ENCODE measurements at regions of chr20 and their contacts with region 1.

Region 1: GRCh38 chr20:37384683-37385174 is 38.8 kb downstream of the SRC start:
- DNase-seq: peak in 1 of 2 donors; percentile 47
- ATAC-seq: peak; percentile 57 to 89
- H3K4me3 ChIP-seq: peak overlapping the region; percentile 54 to 59 (median 57)
- H3K27ac ChIP-seq: no peak overlapping the region
- H3K4me1 ChIP-seq: peaks cover 0 to 5% of the 10 kb centered on the region in 2 donors
- H3K27me3 ChIP-seq: no peaks in the 10 kb centered on the region
- CTCF ChIP-seq: peak; percentile 84 to 97 (median 93)
- POLR2A ChIP-seq: no peak

Region 2: GRCh38 chr20:37192137-37192854 is 192.4 kb before region 1 on chr20:
- in situ Hi-C with region 1: loop called in 3 of 4 experiments (anchors 5 to 10 kb)
- intact Hi-C with region 1: loop called (anchors 1 kb)
- DNase-seq: peak; percentile 74 to 87
- ATAC-seq: peak; percentile 72 to 87
- H3K4me3 ChIP-seq: no peak overlapping the region
- H3K27ac ChIP-seq: peak overlapping the region in 3 of 4 donors; percentile 40 to 72 (median 47)
- H3K4me1 ChIP-seq: peaks cover 47 to 50% of the 10 kb centered on the region in 2 donors
- H3K27me3 ChIP-seq: no peaks in the 10 kb centered on the region
- CTCF ChIP-seq: peak; percentile 73 to 95 (median 85)
- POLR2A ChIP-seq: no peak

Region 3: GRCh38 chr20:37270576-37271420 is 113.9 kb before region 1 on chr20:
- in situ Hi-C with region 1: loop called (anchors 5 to 10 kb)
- intact Hi-C with region 1: loop called (anchors 1 kb)
- DNase-seq: no peak
- ATAC-seq: no peak
- H3K4me3 ChIP-seq: no peak overlapping the region
- H3K27ac ChIP-seq: no peak overlapping the region
- H3K4me1 ChIP-seq: no peaks in the 10 kb centered on the region
- H3K27me3 ChIP-seq: no peaks in the 10 kb centered on the region
- CTCF ChIP-seq: no peak
- POLR2A ChIP-seq: no peak

Region 4: GRCh38 chr20:37276494-37277252 is 108.1 kb before region 1 on chr20:
- in situ Hi-C with region 1: loop called (anchors 5 to 10 kb)
- intact Hi-C with region 1: loop called (anchors 1 kb)
- DNase-seq: peak; percentile 63 to 79
- ATAC-seq: peak; percentile 98 to 99
- H3K4me3 ChIP-seq: no peak overlapping the region
- H3K27ac ChIP-seq: peak overlapping the region; percentile 71 to 77 (median 76)
- H3K4me1 ChIP-seq: peaks cover 8 to 13% of the 10 kb centered on the region in 2 donors
- H3K27me3 ChIP-seq: no peaks in the 10 kb centered on the region
- CTCF ChIP-seq: peak in 1 of 5 experiments; percentile 17
- POLR2A ChIP-seq: no peak

Measured in gastrocnemius medialis (tissue), 4 donors.